GM10248 (cell line): ENCODE measurements at regions of chr3 and their contacts with region 1.

Region 1: DNA sequence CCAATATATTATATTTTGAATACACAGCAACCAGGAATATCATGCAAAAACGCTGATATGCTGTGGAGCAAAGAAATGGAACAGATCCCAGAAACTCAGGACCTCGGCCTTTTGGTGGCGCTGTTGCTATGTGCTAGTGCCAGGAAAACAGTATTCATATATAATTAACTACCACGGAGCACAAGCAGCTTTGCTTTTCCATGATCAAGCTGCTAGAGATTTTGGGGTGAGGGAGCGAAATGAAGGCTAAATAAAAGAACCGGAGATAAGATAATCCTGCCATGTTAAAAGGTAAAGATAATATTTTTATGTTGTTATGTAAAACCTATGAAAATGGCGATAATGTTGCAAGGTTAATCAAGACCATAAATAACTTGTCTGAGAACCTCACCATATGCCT is 157.7 kb upstream of the FAM3D start:
- DNase-seq: peak; percentile 25
- CTCF ChIP-seq: peak; percentile 51

Region 2: DNA sequence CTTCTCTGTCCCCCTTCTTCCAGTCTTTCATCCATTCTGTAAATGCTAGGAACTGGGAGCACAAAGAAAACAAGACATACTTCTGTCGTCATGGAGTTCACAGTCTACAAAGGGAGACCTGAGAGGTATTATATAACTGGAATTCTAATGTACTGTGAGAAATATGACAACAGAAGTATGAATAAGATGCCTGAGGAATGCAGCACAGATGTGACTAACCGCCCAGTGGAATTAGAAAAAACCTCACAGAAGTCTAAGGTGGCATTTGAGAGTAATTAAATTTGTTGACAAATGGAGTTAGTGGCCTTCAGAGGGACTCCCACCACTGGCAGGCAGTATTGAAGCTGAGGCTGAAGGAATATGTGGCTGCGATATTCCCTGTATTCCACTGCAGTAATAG is 10.8 kb after region 1 on chr3:
- CTCF ChIA-PET with region 1: interaction called, 20 read pairs
- POLR2A ChIA-PET with region 1: no interaction called
- DNase-seq: no peak
- CTCF ChIP-seq: no peak

Region 3: GRCh38 chr3:59839810-59840515 is 1015.7 kb after region 1 on chr3:
- CTCF ChIA-PET with region 1: no interaction called
- POLR2A ChIA-PET with region 1: no interaction called
- DNase-seq: peak; percentile 9
- CTCF ChIP-seq: no peak